OCI-LY7 (cell line): ENCODE measurements at regions of chr5 and their contacts with region 1.

Region 1: GRCh38 chr5:151213800-151214613 is 9.9 kb downstream of the CCDC69 start:
- DNase-seq: peak; percentile 97
- H3K4me3 ChIP-seq: peak overlapping the region; percentile 67
- H3K27ac ChIP-seq: peak overlapping the region; percentile 98
- H3K4me1 ChIP-seq: peaks cover 97% of the 10 kb centered on the region
- CTCF ChIP-seq: no peak

Region 2: GRCh38 chr5:151150471-151151262 is 63.3 kb before region 1 on chr5:
- CTCF ChIA-PET with region 1: no interaction called
- POLR2A ChIA-PET with region 1: interaction called, 4 read pairs
- intact Hi-C with region 1: loop called (anchors 2 kb)
- DNase-seq: peak; percentile 81
- H3K4me3 ChIP-seq: peak overlapping the region; percentile 31
- H3K27ac ChIP-seq: peak overlapping the region; percentile 90
- H3K4me1 ChIP-seq: peaks cover 79% of the 10 kb centered on the region
- CTCF ChIP-seq: no peak

Region 3: GRCh38 chr5:151178777-151179487 is 35.1 kb before region 1 on chr5:
- CTCF ChIA-PET with region 1: no interaction called
- POLR2A ChIA-PET with region 1: no interaction called
- intact Hi-C with region 1: no loop called
- DNase-seq: no peak
- H3K4me3 ChIP-seq: no peak overlapping the region
- H3K27ac ChIP-seq: no peak overlapping the region
- H3K4me1 ChIP-seq: peaks cover 7% of the 10 kb centered on the region
- CTCF ChIP-seq: no peak; the same call in 1 of the 2 replicates

Region 4: DNA sequence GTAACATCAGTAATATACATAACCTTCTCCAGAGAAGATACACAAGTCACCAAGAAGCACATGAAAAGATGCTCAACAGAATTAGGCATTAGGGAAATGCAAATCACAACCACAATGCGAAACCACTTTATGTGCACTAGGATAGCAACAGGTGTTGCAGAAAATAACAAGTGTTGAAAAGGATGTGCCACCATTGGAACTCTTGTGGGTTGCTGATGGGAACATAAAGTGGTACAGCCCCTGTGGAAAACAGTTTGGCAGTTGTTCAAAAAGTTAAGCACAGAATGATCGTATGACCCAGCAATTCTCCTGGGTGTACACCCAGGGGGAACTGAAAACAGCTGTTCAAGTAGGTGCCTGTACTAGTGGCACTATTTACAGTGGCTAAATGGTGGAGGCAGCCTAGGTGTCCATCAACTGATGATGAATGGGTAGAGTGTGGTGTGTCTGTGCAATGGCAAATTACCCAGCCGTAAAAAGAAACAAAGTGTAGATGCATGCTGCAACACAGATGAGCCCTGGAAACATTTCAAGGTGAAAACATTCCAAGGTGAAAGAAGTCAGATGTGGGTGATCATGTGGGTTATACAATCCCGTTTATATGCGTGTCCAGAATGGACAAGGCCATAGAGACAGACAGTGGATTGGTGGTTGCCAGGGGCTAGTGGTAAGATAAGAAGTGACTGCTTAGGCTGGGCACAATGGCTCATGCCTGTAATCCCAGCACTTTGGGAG is 17.3 kb before region 1 on chr5:
- CTCF ChIA-PET with region 1: interaction called, 3 read pairs
- POLR2A ChIA-PET with region 1: interaction called, 31 read pairs
- intact Hi-C with region 1: loop called (anchors 1 kb)
- DNase-seq: peak; percentile 96
- H3K4me3 ChIP-seq: peak overlapping the region; percentile 25
- H3K27ac ChIP-seq: peak overlapping the region; percentile 92
- H3K4me1 ChIP-seq: peaks cover 55% of the 10 kb centered on the region
- CTCF ChIP-seq: no peak

Region 5: DNA sequence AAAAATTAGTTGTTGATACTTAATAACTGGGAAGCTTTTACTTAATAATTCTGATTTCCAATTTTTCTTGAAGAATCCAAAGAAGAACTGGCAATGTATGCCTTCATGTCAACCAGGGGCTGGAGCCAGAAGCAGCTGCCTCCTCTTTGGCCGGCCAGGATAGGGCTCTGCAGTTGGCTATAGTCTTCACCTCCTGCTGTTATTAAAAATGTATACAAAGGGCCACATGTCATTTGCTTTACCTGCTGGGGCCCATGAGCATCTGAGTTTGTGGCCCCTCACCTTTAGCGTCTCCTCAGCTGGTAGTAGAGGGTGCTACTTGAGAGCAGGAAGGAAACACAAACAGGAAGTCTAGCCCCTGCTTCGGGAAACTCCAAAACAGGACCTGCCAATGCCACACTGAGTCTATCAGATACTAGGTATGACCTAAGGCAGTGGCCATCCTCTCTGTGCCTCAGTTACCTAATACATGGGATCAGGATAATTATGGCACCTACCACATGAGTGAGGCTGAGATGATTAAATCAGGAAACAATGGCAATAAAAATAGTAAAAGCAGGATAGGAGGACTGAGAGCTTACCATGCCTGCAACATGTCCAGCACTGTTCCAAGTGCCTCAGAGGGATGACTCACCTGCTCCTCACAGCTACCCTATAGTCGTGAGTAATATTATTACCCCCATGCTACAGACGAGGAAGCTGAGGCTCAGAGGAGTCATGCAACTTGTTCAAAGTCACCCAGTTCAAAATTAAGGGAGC is 11.4 kb before region 1 on chr5:
- CTCF ChIA-PET with region 1: interaction called, 3 read pairs
- POLR2A ChIA-PET with region 1: interaction called, 31 read pairs
- intact Hi-C with region 1: no loop called
- DNase-seq: peak; percentile 48
- H3K4me3 ChIP-seq: peak overlapping the region; percentile 24
- H3K27ac ChIP-seq: peak overlapping the region; percentile 47
- H3K4me1 ChIP-seq: peaks cover 53% of the 10 kb centered on the region
- CTCF ChIP-seq: no peak

Region 6: DNA sequence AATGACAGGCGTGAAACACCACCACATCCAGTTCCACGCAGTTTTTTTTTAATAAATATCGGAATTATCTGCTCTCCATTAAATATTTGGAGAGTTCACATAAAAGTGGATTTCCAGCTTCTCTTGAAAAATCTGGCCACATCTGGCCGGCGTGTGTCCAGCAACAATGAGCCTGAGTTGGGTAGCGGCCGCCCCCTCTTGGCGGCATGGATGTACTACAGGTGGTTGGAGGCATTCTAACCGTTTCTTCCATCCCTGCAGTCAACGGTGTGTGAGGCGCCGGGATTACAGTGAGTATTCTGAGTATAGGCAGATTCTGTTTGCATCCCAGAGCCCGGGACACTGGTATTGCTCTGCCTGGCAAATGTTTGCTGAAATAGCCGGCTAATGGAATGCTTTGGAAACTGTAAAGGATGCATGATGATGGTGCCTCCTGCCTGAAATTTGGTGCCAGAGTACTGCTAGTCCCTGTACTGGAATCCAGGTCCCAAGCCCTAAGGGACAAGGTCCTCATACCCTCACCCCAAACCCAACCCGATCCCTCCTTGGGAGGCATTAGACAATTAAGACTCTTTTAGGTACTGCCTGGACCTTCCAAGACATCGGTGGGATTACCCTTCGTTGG is 25.3 kb after region 1 on chr5:
- CTCF ChIA-PET with region 1: interaction called, 8 read pairs
- POLR2A ChIA-PET with region 1: interaction called, 272 read pairs
- intact Hi-C with region 1: loop called (anchors 1 kb)
- DNase-seq: peak; percentile 81
- H3K4me3 ChIP-seq: peak overlapping the region; percentile 49
- H3K27ac ChIP-seq: peak overlapping the region; percentile 72
- H3K4me1 ChIP-seq: peaks cover 79% of the 10 kb centered on the region
- CTCF ChIP-seq: peak; percentile 99

Region 7: DNA sequence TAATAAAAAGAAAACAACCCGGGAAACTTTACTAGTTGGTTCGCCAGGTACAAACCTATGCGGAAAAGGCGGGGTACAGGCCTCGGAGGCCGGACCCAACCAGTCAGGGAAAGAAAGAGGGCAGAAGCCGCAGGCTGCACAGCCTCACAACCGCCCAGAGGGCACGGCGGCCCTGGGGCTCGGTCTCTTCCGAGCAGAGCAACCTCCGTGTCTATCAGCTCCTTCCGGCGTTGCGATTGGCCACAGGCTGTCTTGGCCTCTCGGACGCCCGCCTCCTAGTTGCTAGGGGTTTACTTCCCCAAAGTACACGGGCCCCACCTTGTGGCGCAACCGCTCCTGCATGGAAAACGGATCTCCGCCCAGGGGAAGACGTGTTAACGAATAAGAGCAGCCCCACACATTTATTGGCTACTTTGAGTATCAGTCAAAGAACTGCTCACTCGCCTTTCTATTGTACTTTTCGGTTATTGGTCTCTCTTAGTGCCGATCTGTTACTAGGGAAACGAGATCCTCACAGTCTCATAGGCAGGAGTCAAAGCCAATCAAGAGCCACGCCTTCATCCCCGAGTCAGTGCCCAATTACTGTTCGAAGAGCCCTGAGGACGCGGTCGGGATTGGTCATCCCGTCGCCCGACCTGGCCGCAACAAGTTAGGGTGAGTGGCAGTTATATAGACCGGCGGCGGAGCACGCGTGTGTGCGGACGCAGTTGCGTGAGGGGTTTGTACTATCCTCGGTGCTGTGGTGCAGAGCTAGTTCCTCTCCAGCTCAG is 557.4 kb after region 1 on chr5 and contains the start of gene G3BP1:
- CTCF ChIA-PET with region 1: no interaction called
- POLR2A ChIA-PET with region 1: no interaction called
- intact Hi-C with region 1: loop called (anchors 5 kb)
- DNase-seq: peak; percentile 100
- H3K4me3 ChIP-seq: peak within 1 kb of the TSS; percentile 91
- H3K27ac ChIP-seq: peak within 1 kb of the TSS; percentile 87
- H3K4me1 ChIP-seq: peaks cover 37% of the 10 kb centered on the region
- CTCF ChIP-seq: no peak; the same call in 1 of the 2 replicates
- total RNA-seq, gene G3BP1: 163 and 178 TPM in 2 replicates